ENCODE measurements at regions of chr22 and their contacts with region 1.

Region 1: DNA sequence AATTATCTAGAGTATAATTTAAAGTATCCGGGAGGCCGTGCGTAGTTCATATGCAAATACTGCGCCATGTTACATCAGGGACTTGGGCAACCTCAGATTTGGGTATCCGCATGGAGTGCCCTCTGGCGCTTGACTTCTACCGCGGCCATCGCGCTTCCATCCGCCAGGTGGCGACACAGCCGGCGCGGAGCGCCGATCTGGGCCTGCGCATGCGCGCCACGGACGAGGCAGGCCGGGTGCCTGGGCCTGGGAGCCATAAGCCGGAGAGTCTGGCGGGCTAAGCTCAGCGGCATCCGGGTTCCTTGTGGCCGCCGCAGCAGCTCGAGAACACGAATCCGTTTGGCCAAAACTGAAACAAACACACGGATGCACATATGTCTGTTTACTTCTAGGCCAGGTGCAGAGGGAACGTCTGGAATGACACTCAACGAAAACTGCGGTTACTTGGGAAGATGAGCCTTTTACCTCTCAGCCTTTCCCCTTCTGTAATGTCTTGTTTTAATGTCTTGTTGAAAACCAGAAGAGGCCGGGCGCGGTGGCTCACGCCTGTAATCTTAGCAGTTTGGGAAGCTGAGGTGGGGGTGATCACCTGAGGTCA is 21.9 kb downstream of the SNU13 start:
- DNase-seq: peak; percentile 84
- ATAC-seq: peak; percentile 70
- H3K4me3 ChIP-seq: no peak overlapping the region; the same call in 1 of the 2 replicates
- H3K27ac ChIP-seq: peak overlapping the region; percentile 93
- H3K4me1 ChIP-seq: peaks cover 18% of the 10 kb centered on the region
- H3K27me3 ChIP-seq: no peaks in the 10 kb centered on the region
- CTCF ChIP-seq: peak; percentile 100
- POLR2A ChIP-seq: 0 out of 2 replicates have a peak, but pooled peaks have one; percentile 26
- RAD21 ChIP-seq: peak; percentile 75

Region 2: DNA sequence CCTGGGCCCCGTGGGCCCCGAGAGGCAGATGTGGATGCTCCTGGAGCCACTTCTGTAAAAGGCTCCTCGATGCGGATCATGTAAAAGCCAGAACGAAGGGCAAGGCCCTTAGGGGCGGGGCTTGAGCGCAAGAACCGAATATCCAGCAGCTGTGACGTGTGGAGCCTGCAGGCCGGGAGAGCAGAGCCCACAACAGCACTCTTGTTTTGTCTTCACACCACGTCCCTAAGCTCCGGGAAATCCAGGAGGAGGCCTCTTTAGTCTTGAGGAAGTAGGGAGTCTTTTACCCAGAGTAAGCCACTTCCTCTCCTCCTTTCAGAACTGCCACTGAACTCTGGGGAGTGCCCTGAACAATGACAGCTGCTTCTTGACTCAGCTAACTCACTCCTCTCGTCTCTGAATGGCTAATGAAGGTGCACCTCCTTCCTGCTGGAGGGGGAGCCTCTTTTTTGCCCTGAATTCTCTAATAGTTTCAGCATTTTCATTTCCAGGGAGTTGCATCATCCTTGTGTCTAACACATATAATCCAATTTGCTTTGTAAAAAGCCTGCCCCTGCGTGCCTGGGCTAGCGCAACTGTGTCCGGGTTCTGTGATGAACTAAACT is 449.1 kb before region 1 on chr22:
- CTCF ChIA-PET with region 1: no interaction called
- POLR2A ChIA-PET with region 1: no interaction called
- dilution Hi-C with region 1: no loop called
- in situ Hi-C with region 1: no loop called
- intact Hi-C with region 1: no loop called
- DNase-seq: peak; percentile 92
- ATAC-seq: peak; percentile 95
- H3K4me3 ChIP-seq: peak overlapping the region; percentile 11; the same call in 1 of the 2 replicates
- H3K27ac ChIP-seq: peak overlapping the region; percentile 82
- H3K4me1 ChIP-seq: peaks cover 18% of the 10 kb centered on the region
- H3K27me3 ChIP-seq: no peaks in the 10 kb centered on the region
- CTCF ChIP-seq: no peak
- POLR2A ChIP-seq: peak; percentile 58; the same call in 1 of the 2 replicates
- RAD21 ChIP-seq: no peak

Region 3: GRCh38 chr22:41367039-41367679 is 299.6 kb before region 1 on chr22:
- CTCF ChIA-PET with region 1: no interaction called
- POLR2A ChIA-PET with region 1: no interaction called
- dilution Hi-C with region 1: no loop called
- in situ Hi-C with region 1: no loop called
- intact Hi-C with region 1: no loop called
- DNase-seq: peak; percentile 96
- ATAC-seq: peak; percentile 95
- H3K4me3 ChIP-seq: 0 out of 2 replicates have a peak overlapping the region, but pooled peaks have one; percentile 6
- H3K27ac ChIP-seq: peak overlapping the region; percentile 11; the same call in 1 of the 2 replicates
- H3K4me1 ChIP-seq: peaks cover 11% of the 10 kb centered on the region
- H3K27me3 ChIP-seq: peaks cover 3% of the 10 kb centered on the region; the same call in 1 of the 2 replicates
- CTCF ChIP-seq: peak; percentile 47
- POLR2A ChIP-seq: no peak
- RAD21 ChIP-seq: peak; percentile 48

Region 4: GRCh38 chr22:41656556-41656955 is 10.2 kb before region 1 on chr22:
- CTCF ChIA-PET with region 1: interaction called, 12 read pairs
- POLR2A ChIA-PET with region 1: interaction called, 4 read pairs
- dilution Hi-C with region 1: no loop called
- in situ Hi-C with region 1: no loop called
- intact Hi-C with region 1: no loop called
- DNase-seq: peak; percentile 11
- ATAC-seq: peak; percentile 72
- H3K4me3 ChIP-seq: no peak overlapping the region
- H3K27ac ChIP-seq: peak overlapping the region; percentile 69; the same call in 1 of the 2 replicates
- H3K4me1 ChIP-seq: 0 out of 2 replicates have a peak, but pooled peaks cover 1% of the 10 kb centered on the region
- H3K27me3 ChIP-seq: no peaks in the 10 kb centered on the region
- CTCF ChIP-seq: no peak
- POLR2A ChIP-seq: no peak
- RAD21 ChIP-seq: no peak

Region 5: DNA sequence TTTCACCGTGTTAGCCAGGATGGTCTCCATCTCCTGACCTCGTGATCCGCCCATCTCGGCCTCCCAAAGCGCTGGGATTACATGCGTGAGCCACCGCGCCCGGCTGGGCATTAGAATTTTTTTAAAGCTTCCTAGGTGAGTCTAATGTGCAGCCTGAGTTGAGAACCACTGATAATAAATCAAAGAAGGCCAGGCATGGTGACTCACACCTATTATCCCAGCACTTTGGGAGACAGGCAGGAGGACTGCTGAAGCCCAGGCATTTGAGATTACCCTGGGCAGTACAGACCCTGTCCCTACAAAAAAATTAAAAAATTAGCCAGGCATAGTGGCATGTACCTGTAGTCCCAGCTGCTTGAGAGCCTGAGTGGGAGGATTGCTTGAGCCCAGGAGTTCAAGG is 46.2 kb after region 1 on chr22:
- CTCF ChIA-PET with region 1: no interaction called
- POLR2A ChIA-PET with region 1: no interaction called
- dilution Hi-C with region 1: no loop called
- in situ Hi-C with region 1: no loop called
- intact Hi-C with region 1: no loop called
- DNase-seq: no peak
- ATAC-seq: no peak
- H3K4me3 ChIP-seq: no peak overlapping the region
- H3K27ac ChIP-seq: no peak overlapping the region
- H3K4me1 ChIP-seq: no peaks in the 10 kb centered on the region
- H3K27me3 ChIP-seq: peaks cover 22% of the 10 kb centered on the region
- CTCF ChIP-seq: no peak
- POLR2A ChIP-seq: no peak
- RAD21 ChIP-seq: no peak

Measured in IMR-90 (cell line).